CD4-positive, alpha-beta memory T cell (primary cell): ENCODE measurements at regions of chr1 and their contacts with region 1.

Region 1: GRCh38 chr1:198088360-198089071 is 68.3 kb upstream of the NEK7 start:
- DNase-seq: peak in 4 of 5 donors; percentile 32 to 41 (median 37)
- H3K4me3 ChIP-seq: no peak overlapping the region
- H3K4me3 Mint-ChIP-seq: no peak overlapping the region
- H3K27ac ChIP-seq: no peak overlapping the region
- H3K27ac Mint-ChIP-seq: no peak overlapping the region
- H3K4me1 ChIP-seq: no peaks in the 10 kb centered on the region
- H3K4me1 Mint-ChIP-seq: peaks cover 0 to 2% (median under 1%) of the 10 kb centered on the region in 4 donors
- H3K27me3 ChIP-seq: no peaks in the 10 kb centered on the region
- H3K27me3 Mint-ChIP-seq: peaks cover 2 to 4% of the 10 kb centered on the region in 2 donors

Region 2: GRCh38 chr1:197614916-197615692 is 473.4 kb before region 1 on chr1:
- CTCF ChIA-PET with region 1: interaction called, 3 read pairs
- POLR2A ChIA-PET with region 1: no interaction called
- intact Hi-C with region 1: loop called (anchors 10 kb)
- DNase-seq: peak in 4 of 5 donors; percentile 1 to 23 (median 12)
- H3K4me3 ChIP-seq: no peak overlapping the region
- H3K4me3 Mint-ChIP-seq: no peak overlapping the region
- H3K27ac ChIP-seq: no peak overlapping the region
- H3K27ac Mint-ChIP-seq: no peak overlapping the region
- H3K4me1 ChIP-seq: no peaks in the 10 kb centered on the region
- H3K4me1 Mint-ChIP-seq: no peaks in the 10 kb centered on the region
- H3K27me3 ChIP-seq: no peaks in the 10 kb centered on the region
- H3K27me3 Mint-ChIP-seq: no peaks in the 10 kb centered on the region

Region 3: GRCh38 chr1:198275597-198275996 is 187.1 kb after region 1 on chr1:
- CTCF ChIA-PET with region 1: no interaction called
- POLR2A ChIA-PET with region 1: no interaction called
- intact Hi-C with region 1: loop called (anchors 1 kb)
- DNase-seq: no peak
- H3K4me3 ChIP-seq: no peak overlapping the region
- H3K4me3 Mint-ChIP-seq: no peak overlapping the region
- H3K27ac ChIP-seq: no peak overlapping the region
- H3K27ac Mint-ChIP-seq: no peak overlapping the region
- H3K4me1 ChIP-seq: no peaks in the 10 kb centered on the region
- H3K4me1 Mint-ChIP-seq: peaks cover 4 to 15% (median 11%) of the 10 kb centered on the region in 4 donors
- H3K27me3 ChIP-seq: no peaks in the 10 kb centered on the region
- H3K27me3 Mint-ChIP-seq: no peaks in the 10 kb centered on the region

Region 4: DNA sequence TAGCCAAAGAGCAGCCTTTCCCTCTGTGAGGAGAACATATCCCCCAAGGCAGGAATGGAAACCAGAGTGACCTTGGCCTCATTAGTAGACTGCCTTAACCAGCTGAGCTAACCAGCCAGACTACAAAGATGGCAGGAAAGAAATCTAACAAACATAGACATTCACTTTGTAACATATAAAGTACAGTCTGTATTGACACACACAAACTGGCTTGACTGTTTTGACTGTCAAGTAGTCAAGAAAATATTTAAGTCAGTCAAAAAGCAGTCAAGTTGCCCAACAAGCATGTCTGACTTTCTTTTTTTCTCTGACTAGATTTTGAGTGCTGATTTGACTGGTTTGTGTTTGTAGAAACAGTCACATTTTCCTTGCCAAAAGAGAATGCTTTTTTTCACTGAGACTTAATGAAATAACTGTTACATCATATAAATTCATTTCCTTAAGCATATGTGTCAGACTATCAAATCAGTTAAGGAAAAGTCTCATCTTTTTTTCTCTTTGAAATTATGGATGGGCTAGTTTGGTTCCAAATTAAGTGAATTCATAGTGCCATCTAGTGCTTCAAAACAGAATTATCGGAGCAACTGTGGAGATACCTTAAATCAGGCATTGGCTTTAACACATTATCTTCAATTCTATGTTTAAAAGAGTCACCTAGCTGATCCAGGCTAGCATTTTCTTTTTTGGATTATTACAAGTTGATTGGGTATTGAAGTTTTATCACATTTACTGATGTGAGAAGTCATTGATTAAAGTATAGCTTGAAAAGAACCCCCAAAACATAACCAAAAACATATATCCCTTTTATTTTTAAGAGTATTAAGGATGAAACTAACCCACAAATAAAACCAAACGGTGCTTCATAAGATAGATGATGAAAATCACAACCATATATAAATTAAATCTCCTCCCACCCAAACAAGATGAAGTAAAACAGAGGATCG is 377.0 kb after region 1 on chr1:
- CTCF ChIA-PET with region 1: interaction called, 32 read pairs
- POLR2A ChIA-PET with region 1: no interaction called
- intact Hi-C with region 1: loop called (anchors 1 kb)
- DNase-seq: peak in 4 of 5 donors; percentile 30 to 36 (median 36)
- H3K4me3 ChIP-seq: no peak overlapping the region
- H3K4me3 Mint-ChIP-seq: no peak overlapping the region
- H3K27ac ChIP-seq: no peak overlapping the region
- H3K27ac Mint-ChIP-seq: no peak overlapping the region
- H3K4me1 ChIP-seq: no peaks in the 10 kb centered on the region
- H3K4me1 Mint-ChIP-seq: peaks cover 0 to 1% (median 0%) of the 10 kb centered on the region in 4 donors
- H3K27me3 ChIP-seq: no peaks in the 10 kb centered on the region
- H3K27me3 Mint-ChIP-seq: peaks cover 0 to under 1% of the 10 kb centered on the region in 2 donors